ENCODE measurements at regions of chr3 and their contacts with region 1.

Region 1: DNA sequence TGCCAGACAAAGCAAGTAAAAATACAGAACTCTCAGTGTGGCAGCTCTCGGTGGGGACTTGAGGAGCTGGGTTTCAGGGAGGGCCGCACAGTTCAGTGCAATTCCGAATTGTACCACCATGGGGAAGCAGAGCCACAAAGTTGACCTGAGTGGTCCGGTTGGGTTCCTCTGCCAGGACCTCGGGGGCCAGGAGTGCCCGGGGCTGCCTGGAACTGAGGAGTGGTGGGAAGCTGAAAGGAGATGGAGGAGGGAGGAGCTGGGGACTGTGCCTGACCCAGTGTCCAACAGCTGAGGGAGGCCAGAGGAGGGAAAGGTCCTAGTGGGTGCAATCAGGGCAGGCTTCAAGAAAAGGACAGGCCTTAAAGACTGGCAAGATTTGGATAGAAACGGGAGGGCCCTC is 32.2 kb upstream of the TRH start:
- DNase-seq: peak; percentile 60 to 70
- ATAC-seq: peak; percentile 92 to 96
- H3K4me3 ChIP-seq: no peak overlapping the region
- H3K27ac ChIP-seq: no peak overlapping the region
- H3K4me1 ChIP-seq: no peaks in the 10 kb centered on the region
- CTCF ChIP-seq: peak; percentile 61
- EP300 ChIP-seq: no peak
- POLR2A ChIP-seq: no peak
- RAD21 ChIP-seq: peak; percentile 83 to 86

Region 2: GRCh38 chr3:129289201-129289921 is 652.9 kb before region 1 on chr3:
- CTCF ChIA-PET with region 1: no interaction called
- POLR2A ChIA-PET with region 1: no interaction called
- DNase-seq: no peak
- ATAC-seq: no peak
- H3K4me3 ChIP-seq: no peak overlapping the region
- H3K27ac ChIP-seq: no peak overlapping the region
- H3K4me1 ChIP-seq: no peaks in the 10 kb centered on the region
- CTCF ChIP-seq: no peak
- EP300 ChIP-seq: no peak
- POLR2A ChIP-seq: no peak
- RAD21 ChIP-seq: no peak

Region 3: GRCh38 chr3:129961134-129961541 is 18.8 kb after region 1 on chr3:
- CTCF ChIA-PET with region 1: interaction called, 14 read pairs
- POLR2A ChIA-PET with region 1: no interaction called
- DNase-seq: no peak
- ATAC-seq: peak in 1 of 2 experiments; percentile 24; a peak in 1 of 6 replicates
- H3K4me3 ChIP-seq: no peak overlapping the region
- H3K27ac ChIP-seq: no peak overlapping the region
- H3K4me1 ChIP-seq: no peaks in the 10 kb centered on the region
- CTCF ChIP-seq: no peak
- EP300 ChIP-seq: no peak
- POLR2A ChIP-seq: no peak
- RAD21 ChIP-seq: no peak

Region 4: DNA sequence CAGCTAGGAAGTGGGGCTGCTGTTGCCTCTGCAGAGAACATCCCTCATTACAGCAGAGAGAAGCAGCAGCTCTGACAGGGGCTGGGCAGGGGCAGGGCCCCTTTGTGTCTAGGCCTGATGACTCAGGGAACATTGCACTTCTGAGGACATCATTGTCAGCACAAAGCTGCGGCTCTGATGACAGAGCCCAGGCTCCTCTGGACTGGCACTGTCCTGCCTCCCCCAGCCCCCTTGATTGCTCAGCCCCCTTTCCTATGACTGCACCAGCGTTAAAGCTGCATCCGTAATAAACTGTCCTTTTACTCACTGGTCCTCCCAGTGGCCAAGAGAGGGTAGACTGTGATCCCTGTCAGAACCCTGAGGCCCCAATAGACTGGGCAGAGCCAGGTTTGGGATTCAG is 50.5 kb after region 1 on chr3:
- CTCF ChIA-PET with region 1: interaction called, 22 read pairs
- POLR2A ChIA-PET with region 1: no interaction called
- DNase-seq: peak; percentile 13 to 49
- ATAC-seq: peak; percentile 90 to 97
- H3K4me3 ChIP-seq: no peak overlapping the region
- H3K27ac ChIP-seq: no peak overlapping the region
- H3K4me1 ChIP-seq: no peaks in the 10 kb centered on the region
- CTCF ChIP-seq: 0 out of 3 replicates have a peak, but pooled peaks have one; percentile 14
- EP300 ChIP-seq: no peak
- POLR2A ChIP-seq: no peak
- RAD21 ChIP-seq: no peak

Region 5: GRCh38 chr3:130010556-130010955 is 68.3 kb after region 1 on chr3:
- CTCF ChIA-PET with region 1: interaction called, 49 read pairs
- POLR2A ChIA-PET with region 1: no interaction called
- DNase-seq: no peak
- ATAC-seq: no peak
- H3K4me3 ChIP-seq: no peak overlapping the region
- H3K27ac ChIP-seq: no peak overlapping the region
- H3K4me1 ChIP-seq: no peaks in the 10 kb centered on the region
- CTCF ChIP-seq: no peak
- EP300 ChIP-seq: no peak
- POLR2A ChIP-seq: no peak
- RAD21 ChIP-seq: no peak

Region 6: DNA sequence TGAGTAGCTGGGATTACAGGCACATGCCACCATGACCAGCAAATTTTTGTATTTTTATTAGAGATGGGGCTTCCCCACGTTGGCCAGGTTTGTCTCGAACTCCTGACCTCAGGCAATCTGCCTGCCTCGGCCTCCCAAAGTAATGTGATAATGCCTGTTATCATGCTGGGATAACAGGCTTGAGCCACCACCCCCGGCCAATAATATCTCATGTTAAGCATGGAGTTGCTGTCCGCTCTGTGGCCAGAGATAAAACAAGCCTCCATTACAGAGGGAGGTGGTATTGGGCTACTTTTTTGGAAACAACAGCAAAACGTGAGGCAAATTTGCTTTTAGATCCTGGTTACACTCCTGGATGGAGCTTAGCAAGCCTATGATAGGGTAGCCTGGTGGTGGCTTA is 106.4 kb after region 1 on chr3:
- CTCF ChIA-PET with region 1: interaction called, 10 read pairs
- POLR2A ChIA-PET with region 1: no interaction called
- DNase-seq: no peak
- ATAC-seq: no peak
- H3K4me3 ChIP-seq: no peak overlapping the region
- H3K27ac ChIP-seq: no peak overlapping the region
- H3K4me1 ChIP-seq: no peaks in the 10 kb centered on the region
- CTCF ChIP-seq: no peak
- EP300 ChIP-seq: no peak
- POLR2A ChIP-seq: no peak
- RAD21 ChIP-seq: no peak

Region 7: GRCh38 chr3:130093741-130094391 is 151.6 kb after region 1 on chr3:
- CTCF ChIA-PET with region 1: interaction called, 69 read pairs
- POLR2A ChIA-PET with region 1: no interaction called
- DNase-seq: no peak
- ATAC-seq: no peak
- H3K4me3 ChIP-seq: no peak overlapping the region
- H3K27ac ChIP-seq: no peak overlapping the region
- H3K4me1 ChIP-seq: no peaks in the 10 kb centered on the region
- CTCF ChIP-seq: no peak
- EP300 ChIP-seq: no peak
- POLR2A ChIP-seq: no peak
- RAD21 ChIP-seq: no peak

Region 8: GRCh38 chr3:130111185-130111864 is 169.0 kb after region 1 on chr3:
- CTCF ChIA-PET with region 1: interaction called, 35 read pairs
- POLR2A ChIA-PET with region 1: no interaction called
- DNase-seq: peak; percentile 53 to 97
- ATAC-seq: peak; percentile 100
- H3K4me3 ChIP-seq: peak overlapping the region; percentile 79
- H3K27ac ChIP-seq: peak overlapping the region; percentile 89 to 98
- H3K4me1 ChIP-seq: no peaks in the 10 kb centered on the region
- CTCF ChIP-seq: no peak
- EP300 ChIP-seq: no peak
- POLR2A ChIP-seq: peak; percentile 50
- RAD21 ChIP-seq: no peak